ENCODE measurements at regions of chr13 and their contacts with region 1.

Region 1: DNA sequence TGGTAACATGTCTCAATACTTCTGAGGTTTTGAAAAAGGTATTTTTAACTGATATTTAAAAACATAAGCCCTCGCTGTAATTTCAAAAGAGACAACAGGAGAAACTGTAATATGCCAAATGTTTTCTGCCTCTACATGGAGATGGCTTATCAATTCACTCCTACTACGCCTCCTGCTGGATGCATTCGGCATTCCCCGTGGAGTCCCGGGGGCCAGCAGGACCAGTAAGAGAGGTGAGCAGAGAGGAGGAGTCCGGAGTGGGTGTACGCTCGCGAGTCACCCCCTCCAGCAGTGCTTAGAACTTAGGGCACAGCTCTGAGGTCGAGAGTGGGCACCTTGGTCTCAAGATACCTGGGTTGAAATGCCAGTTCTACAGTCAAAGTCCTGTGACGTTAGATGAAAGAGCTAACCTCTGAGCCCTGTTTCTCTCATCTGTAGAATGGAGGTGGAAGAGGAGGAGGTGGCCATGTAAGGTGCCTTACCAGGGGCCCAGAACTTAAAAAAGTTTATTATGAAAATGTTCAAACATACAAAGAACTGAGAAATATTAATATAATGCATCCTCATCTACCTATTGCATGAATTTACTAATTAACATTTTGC is 110.2 kb downstream of the STK24 start:
- DNase-seq: peak in 1 of 2 donors; percentile 53
- ATAC-seq: no peak
- H3K4me3 ChIP-seq: no peak overlapping the region
- H3K27ac ChIP-seq: no peak overlapping the region
- H3K4me1 ChIP-seq: peaks cover 21% of the 10 kb centered on the region
- H3K27me3 ChIP-seq: no peaks in the 10 kb centered on the region
- CTCF ChIP-seq: peak; percentile 48

Region 2: DNA sequence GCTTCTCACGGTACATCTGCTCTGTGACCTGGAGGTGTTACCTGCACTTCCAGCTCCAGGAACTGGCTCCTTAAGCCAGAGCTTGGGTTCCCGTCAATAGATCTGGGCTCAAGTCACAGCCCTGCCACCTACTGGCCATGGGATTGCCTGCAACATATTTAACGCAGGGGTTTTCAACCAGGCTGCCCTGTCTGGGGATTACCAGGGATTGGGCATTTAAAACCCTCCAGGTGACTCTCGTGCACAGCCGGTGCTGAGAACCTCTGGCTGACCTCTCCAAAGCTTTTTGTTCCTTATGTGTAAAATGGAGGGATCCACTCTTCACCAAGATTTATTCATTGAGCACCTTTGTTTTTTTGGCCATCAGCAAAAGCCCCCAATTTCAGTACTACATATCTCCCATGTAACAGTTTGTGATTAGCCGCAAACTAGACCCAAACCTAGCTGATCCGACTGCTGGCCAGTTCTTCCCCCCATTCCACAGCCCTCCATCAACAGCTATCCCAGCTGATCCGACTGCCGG is 186.8 kb after region 1 on chr13:
- intact Hi-C with region 1: loop called in 1 of 2 experiments (anchors 5 kb)
- DNase-seq: peak; percentile 68 to 79
- ATAC-seq: peak; percentile 91 to 96 (median 94)
- H3K4me3 ChIP-seq: no peak overlapping the region
- H3K27ac ChIP-seq: no peak overlapping the region
- H3K4me1 ChIP-seq: no peaks in the 10 kb centered on the region
- H3K27me3 ChIP-seq: peaks cover 0 to 5% (median 0%) of the 10 kb centered on the region in 3 donors
- CTCF ChIP-seq: peak; percentile 88